ENCODE measurements at regions of chr12 and their contacts with region 1.

Region 1: DNA sequence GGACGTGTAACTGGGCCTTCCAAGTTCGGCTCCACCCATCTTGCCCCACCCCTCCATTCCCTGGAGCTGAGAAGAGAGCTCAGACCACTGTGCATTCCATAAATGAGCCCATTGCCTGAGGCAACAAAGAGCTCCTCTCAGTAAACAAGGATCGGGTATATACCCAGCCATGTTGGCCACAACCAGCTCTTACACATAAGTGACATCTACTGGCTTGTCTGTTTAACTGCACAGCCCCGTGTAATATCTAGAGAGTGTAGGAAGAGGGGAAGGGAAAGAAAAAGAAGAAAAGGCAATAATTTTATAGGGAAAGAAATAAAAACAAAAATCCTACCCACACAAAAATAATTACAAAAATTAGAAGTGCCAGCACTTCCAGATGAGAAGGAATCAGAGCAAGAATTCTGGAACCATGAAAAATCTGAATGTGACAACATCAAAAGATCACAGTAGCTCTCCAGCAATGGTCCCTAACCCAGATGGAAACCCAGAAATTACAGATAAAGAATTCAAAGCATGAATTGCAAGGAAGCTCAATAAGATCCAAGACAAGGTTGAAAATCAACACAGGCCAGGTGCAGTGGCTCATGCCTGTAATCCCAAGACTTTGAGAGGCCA is 308.1 kb downstream of the RPAP3 start:
- DNase-seq: no peak
- ATAC-seq: peak; percentile 72
- H3K4me3 Mint-ChIP-seq: peak overlapping the region; percentile 61
- H3K27ac Mint-ChIP-seq: peak overlapping the region; percentile 94
- H3K4me1 Mint-ChIP-seq: peaks cover 92% of the 10 kb centered on the region
- H3K27me3 Mint-ChIP-seq: no peaks in the 10 kb centered on the region
- CTCF ChIP-seq: no peak

Region 2: DNA sequence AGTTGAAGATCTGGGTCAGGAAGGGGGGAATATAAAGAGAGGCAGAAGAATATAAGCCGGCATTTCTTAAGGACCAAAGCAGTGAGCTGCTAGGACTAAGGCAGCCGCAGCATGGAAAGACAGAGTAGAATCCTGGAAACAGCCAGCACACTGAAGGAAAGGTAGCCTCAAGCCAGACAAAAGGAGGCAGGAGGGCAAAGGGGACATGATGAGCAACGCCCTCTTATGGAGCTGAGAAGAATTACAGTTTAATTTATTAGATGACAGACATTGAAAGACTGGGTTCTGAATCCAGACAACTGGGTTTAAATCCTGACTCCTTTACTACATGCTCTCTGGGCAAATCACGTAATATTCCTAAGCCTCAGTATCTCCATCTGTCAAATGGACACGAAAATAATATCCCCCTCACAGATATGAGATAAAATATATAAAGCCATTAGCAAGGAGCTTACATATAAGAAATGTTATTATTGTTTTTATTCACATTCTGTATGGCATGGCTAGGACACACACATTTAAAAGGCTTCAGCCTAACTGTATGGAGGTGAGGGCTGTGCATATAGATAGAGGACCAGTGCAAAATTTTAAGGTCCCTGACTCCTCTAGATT is 326.4 kb before region 1 on chr12:
- CTCF ChIA-PET with region 1: interaction called, 23 read pairs
- POLR2A ChIA-PET with region 1: interaction called, 3 read pairs
- intact Hi-C with region 1: no loop called
- DNase-seq: no peak
- ATAC-seq: no peak
- H3K4me3 Mint-ChIP-seq: no peak overlapping the region
- H3K27ac Mint-ChIP-seq: no peak overlapping the region
- H3K4me1 Mint-ChIP-seq: no peaks in the 10 kb centered on the region
- H3K27me3 Mint-ChIP-seq: no peaks in the 10 kb centered on the region
- CTCF ChIP-seq: no peak

Region 3: GRCh38 chr12:47216150-47216677 is 181.6 kb before region 1 on chr12:
- CTCF ChIA-PET with region 1: interaction called, 31 read pairs
- POLR2A ChIA-PET with region 1: interaction called, 19 read pairs
- intact Hi-C with region 1: loop called (anchors 1 kb)
- DNase-seq: peak; percentile 42
- ATAC-seq: peak; percentile 80
- H3K4me3 Mint-ChIP-seq: peak overlapping the region; percentile 88
- H3K27ac Mint-ChIP-seq: peak overlapping the region; percentile 96
- H3K4me1 Mint-ChIP-seq: peaks cover 77% of the 10 kb centered on the region
- H3K27me3 Mint-ChIP-seq: no peaks in the 10 kb centered on the region
- CTCF ChIP-seq: no peak

Region 4: DNA sequence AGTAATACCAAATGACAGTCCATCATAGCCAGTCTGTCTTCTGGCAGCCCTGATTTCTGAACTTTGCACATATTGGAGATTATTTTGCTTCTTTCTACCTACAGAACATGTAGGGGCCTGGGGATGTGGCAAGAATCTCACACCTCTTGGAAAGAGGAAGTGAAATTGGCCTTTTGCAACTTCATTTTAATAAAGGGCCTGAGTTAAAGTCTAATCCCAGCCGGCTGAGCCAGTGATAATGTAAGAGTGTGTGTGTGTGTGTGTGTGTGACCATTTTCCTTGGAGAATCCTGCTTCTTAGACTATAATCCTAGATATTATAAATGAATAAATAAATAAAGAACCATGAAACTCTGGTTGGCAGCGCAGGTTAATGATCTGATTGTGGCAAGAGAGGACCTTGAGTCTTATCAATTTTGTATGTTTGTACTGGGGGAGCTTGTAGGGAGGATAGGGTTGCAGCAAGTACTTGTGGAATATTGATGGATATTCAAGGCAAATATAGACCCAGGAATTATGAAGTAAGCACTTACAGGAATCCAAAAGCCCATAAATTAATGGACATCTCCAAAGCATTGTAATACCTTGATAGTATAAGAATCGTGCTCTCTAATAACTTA is 84.9 kb before region 1 on chr12:
- CTCF ChIA-PET with region 1: interaction called, 59 read pairs
- POLR2A ChIA-PET with region 1: interaction called, 81 read pairs
- intact Hi-C with region 1: loop called (anchors 1 kb)
- DNase-seq: no peak
- ATAC-seq: peak; percentile 82
- H3K4me3 Mint-ChIP-seq: peak overlapping the region; percentile 29
- H3K27ac Mint-ChIP-seq: peak overlapping the region; percentile 88
- H3K4me1 Mint-ChIP-seq: peaks cover 77% of the 10 kb centered on the region
- H3K27me3 Mint-ChIP-seq: no peaks in the 10 kb centered on the region
- CTCF ChIP-seq: no peak

Region 5: DNA sequence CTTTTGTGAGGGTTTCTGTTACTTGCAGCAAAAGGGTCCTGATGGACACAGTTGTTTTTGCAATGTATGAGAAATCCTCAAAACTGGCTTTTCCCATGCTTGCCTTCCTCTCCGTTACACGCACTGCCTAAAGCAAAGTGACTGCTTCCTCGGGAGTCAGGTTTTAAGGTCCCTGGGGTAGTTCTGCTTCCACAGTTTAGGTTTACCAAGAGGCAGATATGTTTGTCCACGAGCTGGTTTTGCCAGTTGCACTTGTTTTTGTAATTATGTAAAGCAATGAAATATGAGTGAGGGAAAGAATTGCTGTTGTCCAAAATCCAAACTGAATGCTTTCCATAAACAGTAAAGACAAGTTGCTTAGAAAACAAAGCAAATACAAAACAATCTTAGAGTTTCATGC is 27.4 kb before region 1 on chr12:
- CTCF ChIA-PET with region 1: interaction called, 4 read pairs
- POLR2A ChIA-PET with region 1: interaction called, 14 read pairs
- intact Hi-C with region 1: no loop called
- DNase-seq: no peak
- ATAC-seq: no peak
- H3K4me3 Mint-ChIP-seq: no peak overlapping the region
- H3K27ac Mint-ChIP-seq: no peak overlapping the region
- H3K4me1 Mint-ChIP-seq: peaks cover 3% of the 10 kb centered on the region
- H3K27me3 Mint-ChIP-seq: no peaks in the 10 kb centered on the region
- CTCF ChIP-seq: no peak

Region 6: GRCh38 chr12:47433876-47434275 is 36.1 kb after region 1 on chr12:
- CTCF ChIA-PET with region 1: no interaction called
- POLR2A ChIA-PET with region 1: no interaction called
- intact Hi-C with region 1: no loop called
- DNase-seq: no peak
- ATAC-seq: no peak
- H3K4me3 Mint-ChIP-seq: no peak overlapping the region
- H3K27ac Mint-ChIP-seq: no peak overlapping the region
- H3K4me1 Mint-ChIP-seq: no peaks in the 10 kb centered on the region
- H3K27me3 Mint-ChIP-seq: no peaks in the 10 kb centered on the region
- CTCF ChIP-seq: no peak

Region 7: DNA sequence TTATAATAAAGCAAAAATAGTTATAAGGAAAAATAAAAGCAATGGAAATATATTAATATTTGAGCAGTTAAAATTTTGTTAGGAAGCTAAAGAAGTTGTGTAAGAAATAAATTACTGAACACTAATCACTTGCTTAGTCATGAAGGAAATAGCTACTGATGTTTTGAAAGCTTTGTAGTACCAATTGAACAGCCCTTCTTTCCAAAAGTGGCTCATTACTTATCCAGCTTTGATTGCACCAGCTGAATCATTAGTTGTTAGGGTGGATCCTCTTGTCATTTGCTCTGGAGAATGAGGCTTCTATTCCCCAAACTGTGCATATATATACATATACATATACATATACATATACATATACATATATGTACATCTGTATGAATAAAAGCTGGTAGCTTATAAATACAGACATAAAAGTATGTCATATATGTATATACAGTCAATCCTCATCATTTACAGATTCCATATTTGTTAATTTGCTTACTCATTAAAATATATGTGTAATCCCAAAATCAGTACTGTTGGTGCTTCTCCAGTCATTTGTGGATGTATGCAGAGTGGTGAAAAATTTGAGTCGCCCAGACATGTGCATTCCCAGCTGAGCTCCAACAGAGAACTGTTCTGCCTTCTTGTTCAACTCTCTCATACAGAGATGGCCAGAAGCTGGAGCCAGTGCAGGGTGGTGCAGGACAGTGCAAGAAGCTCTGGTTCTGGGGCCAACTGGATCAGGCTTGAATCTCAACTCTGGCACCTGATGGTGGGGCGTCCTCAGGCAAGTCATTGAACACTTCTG is 93.9 kb after region 1 on chr12:
- CTCF ChIA-PET with region 1: no interaction called
- POLR2A ChIA-PET with region 1: no interaction called
- intact Hi-C with region 1: no loop called
- DNase-seq: no peak
- ATAC-seq: no peak
- H3K4me3 Mint-ChIP-seq: no peak overlapping the region
- H3K27ac Mint-ChIP-seq: no peak overlapping the region
- H3K4me1 Mint-ChIP-seq: no peaks in the 10 kb centered on the region
- H3K27me3 Mint-ChIP-seq: peaks cover 16% of the 10 kb centered on the region
- CTCF ChIP-seq: no peak

Region 8: GRCh38 chr12:47686645-47687240 is 289.0 kb after region 1 on chr12:
- CTCF ChIA-PET with region 1: interaction called, 6 read pairs
- POLR2A ChIA-PET with region 1: no interaction called
- intact Hi-C with region 1: loop called (anchors 5 kb)
- DNase-seq: no peak
- ATAC-seq: no peak
- H3K4me3 Mint-ChIP-seq: no peak overlapping the region
- H3K27ac Mint-ChIP-seq: no peak overlapping the region
- H3K4me1 Mint-ChIP-seq: peaks cover 8% of the 10 kb centered on the region
- H3K27me3 Mint-ChIP-seq: no peaks in the 10 kb centered on the region
- CTCF ChIP-seq: peak; percentile 21

Region 9: GRCh38 chr12:48388430-48388829 is 990.7 kb after region 1 on chr12:
- CTCF ChIA-PET with region 1: no interaction called
- POLR2A ChIA-PET with region 1: no interaction called
- intact Hi-C with region 1: no loop called
- DNase-seq: no peak
- ATAC-seq: no peak
- H3K4me3 Mint-ChIP-seq: no peak overlapping the region
- H3K27ac Mint-ChIP-seq: no peak overlapping the region
- H3K4me1 Mint-ChIP-seq: no peaks in the 10 kb centered on the region
- H3K27me3 Mint-ChIP-seq: peaks cover 44% of the 10 kb centered on the region
- CTCF ChIP-seq: no peak